Right lobe of liver (tissue), 6 donors: ENCODE measurements at regions of chr15 and their contacts with region 1.

Region 1: GRCh38 chr15:25515633-25516032 is 76.8 kb upstream of the UBE3A start:
- DNase-seq: no peak
- ATAC-seq: no peak
- H3K4me3 ChIP-seq: no peak overlapping the region
- H3K27ac ChIP-seq: no peak overlapping the region
- H3K4me1 ChIP-seq: no peaks in the 10 kb centered on the region
- H3K27me3 ChIP-seq: no peaks in the 10 kb centered on the region
- CTCF ChIP-seq: no peak
- POLR2A ChIP-seq: no peak

Region 2: GRCh38 chr15:25469377-25469776 is 46.3 kb before region 1 on chr15:
- intact Hi-C with region 1: no loop called
- DNase-seq: no peak
- ATAC-seq: peak in 1 of 4 donors; percentile 32
- H3K4me3 ChIP-seq: no peak overlapping the region
- H3K27ac ChIP-seq: no peak overlapping the region
- H3K4me1 ChIP-seq: no peaks in the 10 kb centered on the region
- H3K27me3 ChIP-seq: no peaks in the 10 kb centered on the region
- CTCF ChIP-seq: no peak
- POLR2A ChIP-seq: no peak

Region 3: GRCh38 chr15:26051761-26052675 is 536.4 kb after region 1 on chr15:
- intact Hi-C with region 1: loop called in 1 of 2 experiments (anchors 5 kb)
- DNase-seq: no peak
- ATAC-seq: no peak
- H3K4me3 ChIP-seq: no peak overlapping the region
- H3K27ac ChIP-seq: no peak overlapping the region
- H3K4me1 ChIP-seq: no peaks in the 10 kb centered on the region
- H3K27me3 ChIP-seq: no peaks in the 10 kb centered on the region
- CTCF ChIP-seq: no peak
- POLR2A ChIP-seq: no peak